ENCODE measurements at regions of chr22 and their contacts with region 1.

Region 1: GRCh38 chr22:20571531-20572007 is 64.2 kb downstream of the MED15 start:
- DNase-seq: peak; percentile 71
- CTCF ChIP-seq: peak; percentile 76

Region 2: DNA sequence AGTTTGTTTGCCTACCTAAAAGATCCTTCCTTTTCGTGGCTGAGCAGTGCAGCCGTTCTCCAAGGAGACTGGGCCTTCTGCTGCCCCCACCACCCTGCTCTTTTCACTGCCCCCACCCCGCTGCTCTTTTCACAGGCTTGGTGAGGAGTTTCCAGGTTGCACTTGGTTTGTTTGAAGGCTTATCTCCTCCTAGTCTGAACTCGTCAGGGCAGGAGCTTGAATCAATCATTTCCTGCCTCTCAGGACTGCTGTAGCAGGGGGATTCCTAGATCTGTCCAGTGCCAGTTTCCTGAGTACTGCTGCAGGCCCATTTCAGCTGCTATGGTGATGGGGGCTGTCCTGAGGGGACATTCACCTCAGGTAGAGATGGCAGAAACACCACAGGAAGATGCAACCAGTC is 54.1 kb before region 1 on chr22:
- CTCF ChIA-PET with region 1: interaction called, 10 read pairs
- POLR2A ChIA-PET with region 1: no interaction called
- DNase-seq: no peak
- CTCF ChIP-seq: no peak

Region 3: GRCh38 chr22:20550821-20551744 is 20.5 kb before region 1 on chr22:
- CTCF ChIA-PET with region 1: interaction called, 100 read pairs
- POLR2A ChIA-PET with region 1: no interaction called
- DNase-seq: peak; percentile 58
- CTCF ChIP-seq: no peak